ENCODE measurements at regions of chr2 and their contacts with region 1.

Region 1: GRCh38 chr2:37947306-37947705 is 22.2 kb downstream of the RMDN2 start:
- DNase-seq: no peak
- H3K27ac ChIP-seq: no peak overlapping the region
- CTCF ChIP-seq: no peak

Region 2: DNA sequence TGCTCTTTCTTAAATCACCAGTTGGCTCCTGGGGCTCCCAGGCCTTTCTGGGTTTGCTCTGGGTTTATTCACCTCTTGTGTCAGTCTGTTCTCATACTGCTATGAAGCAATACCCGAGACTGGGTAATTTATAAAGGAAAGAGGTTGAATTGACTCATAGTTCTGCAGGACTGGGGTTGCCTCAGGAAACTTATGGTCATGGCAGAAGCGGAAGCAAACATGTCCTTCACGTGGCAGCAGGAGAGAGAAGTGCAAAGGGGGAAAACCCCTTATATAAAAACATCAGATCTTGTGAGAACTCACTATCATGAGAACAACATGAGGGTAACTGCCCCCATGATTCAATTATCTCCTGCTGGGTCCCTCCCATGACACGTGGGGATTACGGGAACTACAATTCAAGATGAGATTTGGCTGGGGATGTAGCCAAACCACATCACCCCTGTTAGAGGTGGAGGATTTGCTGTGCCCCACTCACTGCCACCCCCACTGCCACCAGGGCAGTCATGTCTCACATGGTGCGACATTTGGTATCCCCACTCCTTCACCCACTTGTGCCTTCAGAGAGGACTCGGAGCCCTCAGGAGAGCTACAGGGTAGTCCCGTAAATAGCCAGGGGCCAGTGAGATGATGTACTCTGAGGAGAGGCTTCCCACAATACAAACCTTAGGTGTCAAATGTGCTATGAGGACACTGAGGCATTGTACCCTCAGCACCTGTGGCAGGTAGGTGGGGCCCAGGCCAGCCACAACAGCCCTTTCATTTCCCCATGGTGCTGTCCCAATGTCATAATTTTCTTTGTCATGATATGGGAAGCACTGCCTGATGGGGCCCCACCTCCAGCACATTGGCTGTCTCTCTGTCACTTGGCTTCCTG is 311.6 kb before region 1 on chr2:
- CTCF ChIA-PET with region 1: no interaction called
- POLR2A ChIA-PET with region 1: interaction called, 16 read pairs
- DNase-seq: peak; percentile 26
- H3K27ac ChIP-seq: peak overlapping the region; percentile 68
- CTCF ChIP-seq: no peak

Measured in RWPE1 (cell line).